ENCODE measurements at regions of chr7 and their contacts with region 1.

Region 1: GRCh38 chr7:43674584-43675436 is 54.5 kb downstream of the COA1 start:
- DNase-seq: no peak
- ATAC-seq: no peak
- H3K4me3 ChIP-seq: no peak overlapping the region
- H3K4me3 Mint-ChIP-seq: no peak overlapping the region
- H3K27ac ChIP-seq: no peak overlapping the region
- H3K27ac Mint-ChIP-seq: no peak overlapping the region
- H3K4me1 ChIP-seq: peaks cover 38% of the 10 kb centered on the region
- H3K4me1 Mint-ChIP-seq: peaks cover 84% of the 10 kb centered on the region
- H3K27me3 ChIP-seq: no peaks in the 10 kb centered on the region
- H3K27me3 Mint-ChIP-seq: no peaks in the 10 kb centered on the region
- CTCF ChIP-seq: no peak

Region 2: GRCh38 chr7:43658718-43659548 is 15.9 kb before region 1 on chr7:
- CTCF ChIA-PET with region 1: interaction called, 5 read pairs
- POLR2A ChIA-PET with region 1: interaction called, 3 read pairs
- intact Hi-C with region 1: loop called in 1 of 2 experiments (anchors 1 kb)
- DNase-seq: peak in 1 of 9 experiments; percentile 46
- ATAC-seq: peak; percentile 57
- H3K4me3 ChIP-seq: no peak overlapping the region
- H3K4me3 Mint-ChIP-seq: peak overlapping the region; percentile 69
- H3K27ac ChIP-seq: peak overlapping the region in 1 of 2 experiments; percentile 60
- H3K27ac Mint-ChIP-seq: peak overlapping the region; percentile 87
- H3K4me1 ChIP-seq: peaks cover 49% of the 10 kb centered on the region
- H3K4me1 Mint-ChIP-seq: peaks cover 58% of the 10 kb centered on the region
- H3K27me3 ChIP-seq: no peaks in the 10 kb centered on the region
- H3K27me3 Mint-ChIP-seq: no peaks in the 10 kb centered on the region
- CTCF ChIP-seq: no peak